ENCODE measurements at regions of chr3 and their contacts with region 1.

Region 1: DNA sequence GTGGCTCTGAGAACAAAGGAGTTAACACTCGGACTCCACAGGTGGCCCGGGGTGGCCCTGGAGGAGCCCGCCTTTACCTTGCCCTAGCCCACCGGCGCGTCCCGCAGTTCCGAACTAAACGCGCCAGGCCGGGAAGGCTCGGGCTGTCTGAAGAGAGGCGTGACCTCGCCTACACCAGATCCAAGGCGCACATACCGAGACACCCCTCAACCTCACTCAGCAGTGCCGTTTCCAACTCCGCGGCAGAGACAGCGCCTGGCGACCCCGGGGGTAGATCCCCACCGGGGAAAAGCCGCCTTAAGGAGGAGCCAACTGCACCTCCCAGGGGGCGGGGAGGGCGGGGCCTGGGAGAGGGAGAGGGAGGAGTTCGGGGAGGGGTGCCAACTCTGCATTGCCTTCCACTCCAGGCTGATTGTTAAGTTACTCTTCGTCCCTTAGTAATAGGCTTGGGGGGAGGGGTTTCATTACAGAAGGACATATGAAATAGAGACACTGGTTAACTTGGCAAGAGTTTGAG is at the start of gene DLG1:
- DNase-seq: peak; percentile 95
- ATAC-seq: peak; percentile 72
- H3K4me3 ChIP-seq: peak within 1 kb of the TSS; percentile 86
- H3K27ac ChIP-seq: peak within 1 kb of the TSS; percentile 84
- H3K4me1 ChIP-seq: peaks cover 35% of the 10 kb centered on the region
- H3K27me3 ChIP-seq: no peaks in the 10 kb centered on the region
- CTCF ChIP-seq: no peak
- total RNA-seq, gene DLG1: 60.8 and 77.8 TPM in 2 replicates

Region 2: DNA sequence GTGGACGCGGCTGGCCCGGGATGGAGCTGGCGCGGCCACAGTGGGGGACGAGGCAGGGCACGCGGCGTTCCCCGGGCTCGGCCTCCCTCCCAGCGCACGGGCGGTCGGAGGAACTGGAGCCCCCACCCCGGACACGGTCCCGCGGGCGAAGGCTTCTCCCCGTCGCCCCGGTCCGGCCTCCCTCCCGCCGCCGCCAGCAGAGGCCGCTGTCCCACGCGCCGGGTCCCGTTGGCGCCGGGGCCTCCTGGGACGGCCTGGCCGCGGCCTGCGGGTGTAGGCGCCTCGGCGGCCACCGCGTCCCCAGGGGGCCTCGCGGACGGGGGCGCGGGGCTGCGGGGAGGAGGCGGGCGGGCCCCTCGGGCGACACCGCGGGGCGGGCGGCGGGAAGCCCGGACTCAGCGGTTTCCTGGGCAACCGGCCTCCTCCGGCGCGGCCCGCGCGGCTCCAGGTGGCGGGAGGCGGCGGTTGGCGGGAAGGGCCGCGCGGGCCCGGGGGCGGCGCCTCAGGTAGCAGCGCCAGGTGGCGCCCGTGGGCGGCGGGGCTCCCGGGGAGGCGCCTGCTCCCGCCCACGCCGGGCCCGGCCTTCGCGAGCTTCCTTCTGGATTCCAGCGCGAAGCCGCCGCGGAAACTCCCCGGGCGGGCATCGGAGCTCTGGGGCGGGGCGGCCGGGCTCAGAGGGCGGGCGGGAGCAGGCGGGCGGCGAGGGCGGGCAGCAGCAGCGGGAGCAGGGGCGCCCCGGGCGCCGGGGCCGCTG is 295.5 kb before region 1 on chr3:
- CTCF ChIA-PET with region 1: no interaction called
- POLR2A ChIA-PET with region 1: no interaction called
- intact Hi-C with region 1: no loop called
- DNase-seq: peak; percentile 88
- ATAC-seq: peak; percentile 78
- H3K4me3 ChIP-seq: peak overlapping the region; percentile 83
- H3K27ac ChIP-seq: no peak overlapping the region
- H3K4me1 ChIP-seq: peaks cover 12% of the 10 kb centered on the region
- H3K27me3 ChIP-seq: no peaks in the 10 kb centered on the region
- CTCF ChIP-seq: peak; percentile 56

Region 3: GRCh38 chr3:197270558-197271317 is 27.7 kb before region 1 on chr3:
- CTCF ChIA-PET with region 1: no interaction called
- POLR2A ChIA-PET with region 1: no interaction called
- intact Hi-C with region 1: no loop called
- DNase-seq: no peak
- ATAC-seq: no peak; the same call in 1 of the 2 replicates
- H3K4me3 ChIP-seq: no peak overlapping the region
- H3K27ac ChIP-seq: no peak overlapping the region
- H3K4me1 ChIP-seq: peaks cover 15% of the 10 kb centered on the region; the same call in 1 of the 2 replicates
- H3K27me3 ChIP-seq: no peaks in the 10 kb centered on the region
- CTCF ChIP-seq: no peak

Region 4: GRCh38 chr3:197309528-197310361 is 11.3 kb after region 1 on chr3:
- CTCF ChIA-PET with region 1: no interaction called
- POLR2A ChIA-PET with region 1: interaction called, 20 read pairs
- intact Hi-C with region 1: loop called (anchors 1 kb)
- DNase-seq: peak; percentile 89
- ATAC-seq: peak; percentile 65
- H3K4me3 ChIP-seq: peak overlapping the region; percentile 31
- H3K27ac ChIP-seq: peak overlapping the region; percentile 83
- H3K4me1 ChIP-seq: peaks cover 60% of the 10 kb centered on the region
- H3K27me3 ChIP-seq: no peaks in the 10 kb centered on the region
- CTCF ChIP-seq: no peak

Region 5: GRCh38 chr3:197339841-197340520 is 41.6 kb after region 1 on chr3:
- CTCF ChIA-PET with region 1: no interaction called
- POLR2A ChIA-PET with region 1: no interaction called
- intact Hi-C with region 1: no loop called
- DNase-seq: peak; percentile 60
- ATAC-seq: peak; percentile 92
- H3K4me3 ChIP-seq: no peak overlapping the region
- H3K27ac ChIP-seq: peak overlapping the region; percentile 56
- H3K4me1 ChIP-seq: peaks cover 23% of the 10 kb centered on the region
- H3K27me3 ChIP-seq: no peaks in the 10 kb centered on the region
- CTCF ChIP-seq: no peak

Region 6: DNA sequence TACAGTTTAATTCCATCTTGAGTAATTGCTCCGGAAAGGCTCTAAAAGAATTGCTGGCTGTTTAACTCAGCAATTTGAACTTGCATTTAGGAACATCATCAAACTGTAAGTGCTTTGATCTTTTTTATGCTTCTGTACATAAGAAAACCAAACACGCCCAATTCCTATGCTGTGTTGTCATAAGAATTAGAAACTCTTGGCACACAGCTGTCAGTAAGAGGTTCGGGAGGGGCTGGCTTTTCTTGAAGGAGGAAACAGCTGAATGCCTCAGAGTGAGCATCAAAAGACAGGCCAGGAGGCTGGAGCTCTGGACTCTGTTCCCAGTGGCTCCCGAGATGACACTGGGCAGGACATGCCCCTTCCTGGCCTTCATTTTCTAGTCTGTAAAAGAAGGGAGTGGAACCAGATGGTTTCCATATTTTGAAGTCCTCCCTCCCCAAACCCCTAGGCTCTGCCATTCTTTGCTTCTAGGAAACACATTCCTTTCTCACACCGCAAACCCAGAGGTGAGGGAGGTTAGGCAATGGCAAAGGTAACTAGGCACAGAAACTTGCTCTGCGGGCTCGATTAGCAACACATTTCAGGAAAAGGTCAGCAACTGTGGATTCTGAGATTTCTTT is 73.8 kb after region 1 on chr3:
- CTCF ChIA-PET with region 1: interaction called, 4 read pairs
- POLR2A ChIA-PET with region 1: interaction called, 3 read pairs
- intact Hi-C with region 1: loop called (anchors 1 kb)
- DNase-seq: peak; percentile 98
- ATAC-seq: peak; percentile 73
- H3K4me3 ChIP-seq: peak overlapping the region; percentile 4; the same call in 1 of the 2 replicates
- H3K27ac ChIP-seq: peak overlapping the region; percentile 90
- H3K4me1 ChIP-seq: peaks cover 50% of the 10 kb centered on the region
- H3K27me3 ChIP-seq: no peaks in the 10 kb centered on the region
- CTCF ChIP-seq: no peak

Region 7: DNA sequence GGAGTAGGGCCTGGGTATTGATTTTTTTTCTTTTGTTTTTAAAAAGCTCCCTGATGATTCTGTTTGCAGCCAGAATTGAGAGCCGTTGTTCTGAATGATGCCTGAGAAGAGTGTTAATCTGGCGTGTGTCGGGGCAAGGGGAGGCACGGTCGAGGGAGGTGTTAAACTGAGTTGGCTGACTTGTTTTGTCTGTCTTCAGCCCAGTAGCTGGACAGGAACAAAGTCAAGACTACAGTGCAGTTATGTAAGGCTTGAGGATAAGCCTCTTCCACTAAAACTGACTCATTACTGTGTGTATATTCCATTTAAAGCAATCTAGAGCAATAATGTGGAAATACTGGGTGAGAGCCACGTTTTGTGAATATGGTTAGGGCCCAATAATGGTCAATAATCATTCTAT is 119.0 kb after region 1 on chr3:
- CTCF ChIA-PET with region 1: no interaction called
- POLR2A ChIA-PET with region 1: no interaction called
- intact Hi-C with region 1: loop called (anchors 2 kb)
- DNase-seq: peak; percentile 65
- ATAC-seq: peak; percentile 43
- H3K4me3 ChIP-seq: no peak overlapping the region
- H3K27ac ChIP-seq: no peak overlapping the region
- H3K4me1 ChIP-seq: peaks cover 19% of the 10 kb centered on the region
- H3K27me3 ChIP-seq: no peaks in the 10 kb centered on the region
- CTCF ChIP-seq: no peak

Region 8: DNA sequence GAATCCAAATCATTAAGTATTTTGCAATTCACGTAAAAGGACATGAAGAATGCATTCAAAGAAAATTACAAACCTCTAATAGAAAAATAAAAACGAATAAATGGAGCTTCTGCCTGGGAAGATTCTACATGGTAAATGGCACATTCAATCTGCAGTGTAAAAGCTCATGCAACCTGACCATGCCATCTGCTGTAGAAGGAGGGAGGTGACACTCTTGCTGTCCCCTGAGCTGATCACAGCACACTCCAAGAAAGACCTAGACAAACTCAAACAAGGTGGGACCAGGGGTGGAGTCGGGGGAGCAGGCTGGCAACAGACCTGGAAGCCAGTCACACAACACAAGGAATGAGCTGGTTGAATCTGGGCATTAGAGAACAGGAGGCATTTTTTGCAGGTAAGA is 155.6 kb after region 1 on chr3:
- CTCF ChIA-PET with region 1: interaction called, 5 read pairs
- POLR2A ChIA-PET with region 1: no interaction called
- intact Hi-C with region 1: loop called (anchors 1 kb)
- DNase-seq: peak; percentile 48
- ATAC-seq: peak; percentile 92
- H3K4me3 ChIP-seq: no peak overlapping the region
- H3K27ac ChIP-seq: no peak overlapping the region
- H3K4me1 ChIP-seq: no peaks in the 10 kb centered on the region
- H3K27me3 ChIP-seq: no peaks in the 10 kb centered on the region
- CTCF ChIP-seq: peak; percentile 60

Region 9: DNA sequence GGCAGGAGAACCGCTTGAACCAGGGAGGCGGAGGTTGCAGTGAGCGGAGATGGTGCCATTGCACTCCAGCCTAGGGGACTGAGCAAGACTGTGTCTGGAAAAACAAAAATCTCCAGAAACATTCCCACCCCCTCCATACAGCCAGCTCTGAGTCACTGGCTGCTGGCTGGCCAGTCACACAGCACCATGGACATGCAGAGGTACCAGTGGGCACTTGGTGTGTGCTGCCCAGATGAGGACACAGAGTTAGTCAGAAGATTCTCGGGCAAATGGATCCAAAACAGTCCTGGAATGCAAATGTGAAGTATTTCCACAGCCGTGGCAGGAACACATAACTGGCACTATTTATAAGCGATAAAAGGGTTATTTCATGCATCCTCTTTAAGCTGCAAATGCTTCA is 212.7 kb after region 1 on chr3:
- CTCF ChIA-PET with region 1: no interaction called
- POLR2A ChIA-PET with region 1: interaction called, 3 read pairs
- intact Hi-C with region 1: loop called (anchors 5 kb)
- DNase-seq: peak; percentile 44
- ATAC-seq: peak; percentile 66
- H3K4me3 ChIP-seq: no peak overlapping the region
- H3K27ac ChIP-seq: no peak overlapping the region
- H3K4me1 ChIP-seq: peaks cover 34% of the 10 kb centered on the region
- H3K27me3 ChIP-seq: no peaks in the 10 kb centered on the region
- CTCF ChIP-seq: no peak

Measured in PC-3 (cell line).